Ascending aorta (tissue), 2 donors: ENCODE measurements at regions of chr14 and their contacts with region 1.

Region 1: DNA sequence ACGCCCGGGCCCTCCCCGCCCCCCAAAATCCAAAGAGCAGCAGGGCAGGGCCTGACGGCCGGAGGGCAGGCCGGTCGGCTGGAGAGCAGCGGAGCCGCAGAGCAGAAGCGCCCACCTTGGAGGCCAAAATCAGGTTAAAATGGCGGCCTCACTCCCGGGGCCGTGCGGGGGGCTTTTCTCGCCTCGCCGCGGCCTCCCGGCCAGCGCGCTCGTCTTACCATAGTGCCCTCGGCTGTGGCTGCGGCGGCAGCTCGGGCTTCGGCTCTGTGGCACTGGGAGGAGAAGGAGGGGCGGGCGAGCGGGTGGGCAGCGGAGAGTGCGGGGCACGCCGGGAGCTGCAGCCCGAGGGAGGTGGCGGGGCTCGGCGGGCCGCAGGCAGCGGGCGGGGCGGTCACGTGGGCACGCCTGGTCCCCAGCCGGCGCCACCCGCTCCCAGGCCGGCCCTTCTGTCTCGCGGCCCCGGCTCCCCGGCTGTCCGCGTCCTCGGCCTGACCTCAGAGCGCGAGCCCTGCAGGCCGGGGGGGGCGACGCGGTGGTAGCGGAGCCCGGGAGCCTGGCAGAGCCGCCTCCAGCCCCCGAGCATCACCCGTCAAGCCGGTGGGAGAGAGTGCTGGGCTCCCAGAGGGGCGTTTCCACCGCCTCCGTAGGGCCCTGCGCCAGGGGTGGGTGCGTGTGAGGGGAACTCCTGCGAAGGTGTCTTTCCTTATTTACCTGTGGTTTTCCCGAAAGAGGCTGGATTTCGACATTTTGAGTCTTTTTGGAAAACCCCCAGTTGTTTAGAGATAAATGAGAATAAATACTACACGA is at the start of gene CFL2:
- DNase-seq: peak; percentile 55 to 91
- H3K4me3 ChIP-seq: peak within 1 kb of the TSS; percentile 75 to 85
- H3K27ac ChIP-seq: peak within 1 kb of the TSS; percentile 88 to 99
- H3K4me1 ChIP-seq: peaks cover 0 to 23% of the 10 kb centered on the region in 2 donors
- H3K27me3 ChIP-seq: no peaks in the 10 kb centered on the region
- CTCF ChIP-seq: no peak
- total RNA-seq, gene CFL2: 49.0 TPM

Region 2: GRCh38 chr14:34461334-34462131 is 253.0 kb before region 1 on chr14:
- intact Hi-C with region 1: loop called (anchors 5 kb)
- DNase-seq: peak in 1 of 2 donors; percentile 77
- H3K4me3 ChIP-seq: peak overlapping the region; percentile 80 to 86
- H3K27ac ChIP-seq: peak overlapping the region; percentile 76 to 94
- H3K4me1 ChIP-seq: peaks cover 0 to 7% of the 10 kb centered on the region in 2 donors
- H3K27me3 ChIP-seq: no peaks in the 10 kb centered on the region
- CTCF ChIP-seq: no peak

Region 3: DNA sequence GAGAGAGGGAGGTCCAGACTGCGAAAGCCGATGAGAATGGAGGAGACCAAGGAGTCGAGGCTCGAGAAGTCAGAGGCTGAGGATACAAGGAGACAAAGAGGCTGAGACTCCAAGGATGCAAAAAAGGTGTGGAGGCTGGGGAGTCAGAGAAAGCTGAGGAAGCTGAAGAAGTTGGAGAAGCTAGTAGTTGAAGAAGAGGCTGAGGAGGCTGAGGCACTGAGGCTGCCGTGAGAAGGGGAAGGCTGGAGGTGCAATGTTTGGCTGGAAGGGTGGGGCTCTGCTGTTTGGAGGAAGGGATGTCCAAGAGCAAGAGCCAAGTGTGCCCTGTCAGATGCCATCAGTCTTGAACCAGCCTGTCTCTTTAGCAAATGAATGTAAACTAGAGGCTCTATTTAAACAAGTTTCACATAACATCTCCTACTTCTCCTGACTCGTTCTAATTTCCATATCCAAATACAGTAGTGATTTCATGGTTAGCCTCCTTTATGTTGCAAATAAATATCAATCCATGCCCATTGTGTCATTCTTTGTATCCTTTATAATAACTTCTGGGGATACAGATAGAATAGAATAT is 241.7 kb before region 1 on chr14:
- intact Hi-C with region 1: no loop called
- DNase-seq: no peak
- H3K4me3 ChIP-seq: no peak overlapping the region
- H3K27ac ChIP-seq: no peak overlapping the region
- H3K4me1 ChIP-seq: no peaks in the 10 kb centered on the region
- H3K27me3 ChIP-seq: no peaks in the 10 kb centered on the region
- CTCF ChIP-seq: no peak

Region 4: GRCh38 chr14:34496679-34497513 is 217.6 kb before region 1 on chr14:
- intact Hi-C with region 1: no loop called
- DNase-seq: peak; percentile 27 to 90
- H3K4me3 ChIP-seq: no peak overlapping the region
- H3K27ac ChIP-seq: peak overlapping the region; percentile 19 to 78
- H3K4me1 ChIP-seq: peaks cover 0 to 12% of the 10 kb centered on the region in 2 donors
- H3K27me3 ChIP-seq: no peaks in the 10 kb centered on the region
- CTCF ChIP-seq: peak in 1 of 3 experiments; percentile 12

Region 5: DNA sequence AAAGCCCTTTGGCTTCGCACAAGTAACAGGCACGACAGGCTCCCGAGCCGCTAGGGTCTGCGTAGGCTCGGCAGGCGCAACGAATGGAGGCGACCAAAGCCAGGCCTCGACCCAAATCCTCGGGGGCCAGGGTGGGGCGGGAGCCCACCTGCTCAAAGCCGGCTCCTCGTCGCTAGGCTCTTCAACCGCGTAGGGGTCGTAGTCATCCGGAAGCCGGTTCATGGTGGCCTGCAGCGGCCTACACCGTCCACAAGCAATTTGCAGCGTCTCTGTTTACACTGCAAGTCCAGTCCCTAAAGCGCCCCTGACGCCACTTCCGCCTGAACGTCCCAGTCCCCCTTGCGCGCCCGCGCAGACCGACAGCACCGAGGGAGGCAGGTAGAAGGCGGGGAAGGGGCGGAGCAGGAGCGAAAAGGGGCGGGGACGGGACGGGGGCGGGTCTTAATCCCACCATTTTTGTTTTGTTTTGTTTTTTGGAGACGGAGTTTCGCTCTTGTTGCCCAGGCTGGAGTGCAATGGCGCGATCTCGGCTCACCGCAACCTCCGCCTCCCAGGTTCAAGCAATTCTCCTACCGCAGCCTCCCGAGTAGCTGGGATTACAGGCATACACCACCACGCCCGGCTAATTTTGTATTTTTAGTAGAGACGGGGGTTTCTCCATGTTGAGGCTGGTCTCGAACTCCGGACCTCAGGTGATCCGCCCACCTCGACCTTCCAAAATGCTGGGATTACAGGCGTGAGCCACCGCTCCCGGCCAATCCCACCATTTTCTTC is 174.9 kb before region 1 on chr14 and contains the start of gene EAPP:
- intact Hi-C with region 1: loop called (anchors 5 kb)
- DNase-seq: peak; percentile 96 to 99
- H3K4me3 ChIP-seq: peak within 1 kb of the TSS; percentile 75 to 86
- H3K27ac ChIP-seq: peak within 1 kb of the TSS; percentile 92
- H3K4me1 ChIP-seq: peaks cover 2 to 3% of the 10 kb centered on the region in 2 donors
- H3K27me3 ChIP-seq: no peaks in the 10 kb centered on the region
- CTCF ChIP-seq: no peak
- total RNA-seq, gene EAPP: 10.1 TPM

Region 6: GRCh38 chr14:34629657-34630529 is 84.6 kb before region 1 on chr14 and contains the start of gene SNX6:
- intact Hi-C with region 1: loop called (anchors 5 kb)
- DNase-seq: peak; percentile 46 to 92
- H3K4me3 ChIP-seq: peak within 1 kb of the TSS; percentile 85 to 96
- H3K27ac ChIP-seq: peak within 1 kb of the TSS; percentile 87 to 94
- H3K4me1 ChIP-seq: peaks cover 5 to 6% of the 10 kb centered on the region in 2 donors
- H3K27me3 ChIP-seq: no peaks in the 10 kb centered on the region
- CTCF ChIP-seq: no peak
- total RNA-seq, gene SNX6: 25.3 TPM

Region 7: GRCh38 chr14:35046048-35046741 is 331.7 kb after region 1 on chr14 and contains the start of gene FAM177A1:
- intact Hi-C with region 1: loop called (anchors 2 kb)
- DNase-seq: peak; percentile 97 to 100
- H3K4me3 ChIP-seq: peak within 1 kb of the TSS; percentile 81 to 89
- H3K27ac ChIP-seq: peak within 1 kb of the TSS; percentile 99
- H3K4me1 ChIP-seq: peaks cover 0 to 14% of the 10 kb centered on the region in 2 donors
- H3K27me3 ChIP-seq: no peaks in the 10 kb centered on the region
- CTCF ChIP-seq: no peak
- total RNA-seq, gene FAM177A1: 35.1 TPM

Region 8: DNA sequence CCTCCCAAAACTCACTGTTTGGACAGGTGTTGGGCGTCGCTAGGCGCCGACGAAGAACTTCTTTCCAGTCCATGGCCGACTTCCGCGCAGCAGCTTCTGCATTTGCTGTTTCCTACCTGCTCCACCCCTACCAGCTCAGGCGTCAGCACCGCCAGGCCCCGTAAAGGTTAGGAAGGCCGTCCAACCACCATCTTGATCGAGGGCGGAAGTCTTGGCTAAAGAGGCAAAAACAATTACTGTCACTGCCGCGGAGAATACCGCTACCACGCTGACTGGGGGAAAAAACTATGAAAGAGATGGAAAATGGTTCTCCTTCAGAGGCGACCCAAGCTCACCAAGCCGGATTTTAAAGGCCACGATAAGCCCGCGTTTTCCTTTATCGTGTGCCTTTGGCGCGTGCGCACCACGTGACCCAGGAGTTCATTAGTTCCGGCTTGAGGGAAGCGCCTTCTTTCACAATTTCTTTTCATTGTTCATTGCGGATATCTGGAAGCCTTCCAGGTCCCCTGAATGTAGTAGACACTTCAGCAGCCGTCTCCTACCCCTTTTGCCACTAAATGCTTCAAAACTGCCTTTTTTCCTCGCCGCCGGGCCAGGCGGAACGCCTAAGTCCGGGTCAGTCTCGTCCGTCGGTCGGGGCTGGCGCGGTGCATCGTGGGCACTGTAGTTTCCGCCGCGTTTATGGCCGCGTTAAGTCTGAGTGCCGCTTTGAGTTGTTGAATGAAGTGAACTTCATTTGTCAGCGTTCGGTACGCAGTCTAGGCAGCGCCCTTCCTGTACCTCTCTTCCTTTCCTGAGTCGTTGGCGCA is 407.6 kb after region 1 on chr14 and contains the starts of genes PPP2R3C and PRORP:
- intact Hi-C with region 1: loop called (anchors 5 kb)
- DNase-seq: peak; percentile 74 to 94
- H3K4me3 ChIP-seq: peak within 1 kb of the TSS; percentile 83 to 92
- H3K27ac ChIP-seq: peak within 1 kb of the TSS; percentile 91 to 98
- H3K4me1 ChIP-seq: peaks cover 3 to 18% of the 10 kb centered on the region in 2 donors
- H3K27me3 ChIP-seq: no peaks in the 10 kb centered on the region
- CTCF ChIP-seq: no peak
- total RNA-seq, gene PPP2R3C: 63.6 TPM
- total RNA-seq, gene PRORP: 42.5 TPM